IMR-90 (cell line): ENCODE measurements at regions of chr3 and their contacts with region 1.

Region 1: DNA sequence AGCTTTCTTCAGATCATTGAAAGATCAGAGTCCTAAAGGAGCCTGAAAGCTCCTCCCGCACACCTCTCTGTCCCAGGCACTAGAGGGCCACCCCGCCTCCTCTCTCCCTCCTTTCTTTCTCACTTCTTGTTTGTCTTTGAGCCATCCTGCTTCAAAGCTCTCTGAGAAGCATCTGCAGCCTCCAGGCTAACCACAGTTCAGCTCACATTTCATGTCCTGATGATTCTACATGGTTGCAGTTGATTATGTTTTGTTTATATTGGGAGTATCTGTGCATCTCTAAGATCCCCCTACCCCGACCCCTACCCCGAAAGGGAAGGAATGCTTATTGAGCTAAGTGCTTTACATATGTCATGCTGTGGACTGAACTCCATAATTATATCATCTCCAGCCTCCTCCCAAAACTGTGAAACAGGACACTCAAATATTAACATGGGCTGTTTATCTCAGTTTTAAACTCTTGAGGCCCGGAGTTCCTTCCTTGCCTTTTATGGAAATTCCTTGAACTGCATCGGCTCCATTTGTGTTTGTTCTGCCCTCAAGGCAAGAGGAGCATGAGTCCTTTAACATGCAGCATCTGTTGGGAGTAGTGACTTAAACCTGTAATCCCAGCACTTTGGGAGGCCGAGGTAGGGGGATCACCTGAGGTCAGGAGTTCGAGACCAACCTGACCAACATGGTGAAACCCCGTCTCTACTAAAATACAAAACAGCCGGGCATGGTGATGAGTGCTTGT is 30.9 kb downstream of the MGLL start:
- DNase-seq: peak; percentile 90
- ATAC-seq: peak; percentile 83
- H3K4me3 ChIP-seq: no peak overlapping the region
- H3K27ac ChIP-seq: peak overlapping the region; percentile 99
- H3K4me1 ChIP-seq: peaks cover 30% of the 10 kb centered on the region
- H3K27me3 ChIP-seq: no peaks in the 10 kb centered on the region
- CTCF ChIP-seq: peak; percentile 40
- POLR2A ChIP-seq: no peak
- RAD21 ChIP-seq: peak; percentile 51

Region 2: DNA sequence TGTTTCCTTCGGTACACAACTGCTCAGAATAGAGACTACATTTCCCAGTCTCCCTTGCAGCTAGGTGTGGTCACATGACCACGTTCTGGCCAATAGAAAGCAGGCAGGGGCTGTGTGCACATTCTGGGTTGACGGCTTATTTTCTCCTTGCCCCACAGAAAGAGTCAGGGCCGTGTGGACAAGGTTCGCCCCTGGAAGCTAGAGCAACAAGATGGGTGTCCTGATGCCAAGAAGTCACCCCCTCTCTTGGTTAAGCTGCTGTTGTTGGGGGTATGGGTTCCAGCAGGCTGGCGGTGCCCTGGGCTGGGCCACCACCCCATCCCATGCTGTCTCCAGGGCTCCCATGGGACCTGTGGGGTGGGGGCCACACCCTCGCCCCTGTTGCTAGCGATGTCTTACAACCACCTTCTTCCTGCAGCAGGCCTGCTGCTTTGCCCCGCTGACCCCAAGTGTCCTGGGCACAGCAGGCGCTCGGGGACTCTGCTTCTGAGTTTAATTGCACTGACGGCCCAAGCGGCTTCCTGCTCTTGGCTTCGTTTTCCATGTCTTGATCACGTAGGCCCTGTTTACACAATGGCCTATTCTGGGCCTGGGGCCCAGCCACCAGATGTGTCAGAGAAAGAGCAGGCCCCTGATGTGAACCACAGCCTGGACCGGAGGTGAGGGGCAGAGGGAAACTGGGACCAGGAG is 93.7 kb before region 1 on chr3:
- CTCF ChIA-PET with region 1: interaction called, 5 read pairs
- POLR2A ChIA-PET with region 1: no interaction called
- dilution Hi-C with region 1: no loop called
- in situ Hi-C with region 1: no loop called
- intact Hi-C with region 1: loop called (anchors 2 kb)
- DNase-seq: peak; percentile 90
- ATAC-seq: peak; percentile 77
- H3K4me3 ChIP-seq: no peak overlapping the region
- H3K27ac ChIP-seq: peak overlapping the region; percentile 88
- H3K4me1 ChIP-seq: peaks cover 30% of the 10 kb centered on the region
- H3K27me3 ChIP-seq: no peaks in the 10 kb centered on the region
- CTCF ChIP-seq: no peak
- POLR2A ChIP-seq: no peak
- RAD21 ChIP-seq: 0 out of 2 replicates have a peak, but pooled peaks have one; percentile 13

Region 3: DNA sequence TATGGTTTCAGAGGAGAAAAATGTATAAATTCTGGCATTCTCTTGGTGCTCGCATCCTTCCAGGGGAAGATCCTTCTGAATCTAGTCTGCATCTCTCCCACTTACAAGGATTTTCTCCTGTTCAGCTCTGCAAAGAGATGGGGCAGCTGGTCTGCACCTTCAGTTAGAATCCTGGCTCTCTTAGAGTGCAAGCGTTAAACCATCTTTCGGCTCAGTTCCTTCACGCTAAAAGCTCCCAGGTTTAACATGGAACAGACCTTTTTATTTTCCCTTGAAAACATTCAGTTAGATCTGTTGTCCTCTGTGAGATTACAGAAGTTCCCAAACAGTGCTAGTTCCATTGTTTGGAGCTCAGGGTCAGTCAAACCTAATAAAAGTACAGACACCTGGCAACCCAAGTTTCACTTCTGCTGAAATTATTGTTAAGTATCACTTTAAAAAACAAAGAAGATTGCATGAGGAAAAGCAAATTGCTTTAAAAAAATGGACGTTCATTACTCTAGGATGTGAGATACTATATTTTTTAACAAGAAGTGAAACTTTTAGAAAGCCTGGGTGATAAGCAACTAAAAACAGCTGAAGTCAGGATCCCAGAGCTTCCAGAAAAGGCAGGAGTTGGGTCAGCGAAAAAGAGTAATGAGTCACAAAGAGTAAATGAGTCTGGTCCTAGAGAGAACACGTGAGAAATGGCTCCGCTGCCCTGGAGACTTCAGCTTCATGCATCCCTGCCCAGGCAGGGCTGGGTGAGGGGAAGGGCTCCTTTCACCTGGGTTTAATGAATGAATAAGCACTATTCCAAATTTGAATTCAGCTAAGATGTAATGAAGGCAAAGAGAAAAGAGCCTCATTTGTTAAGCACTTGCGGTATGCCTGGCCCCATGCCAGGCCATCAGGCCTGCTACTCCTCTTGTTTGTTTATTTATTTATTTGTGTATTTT is 55.3 kb before region 1 on chr3:
- CTCF ChIA-PET with region 1: no interaction called
- POLR2A ChIA-PET with region 1: no interaction called
- dilution Hi-C with region 1: no loop called
- in situ Hi-C with region 1: no loop called
- intact Hi-C with region 1: loop called (anchors 1 kb)
- DNase-seq: peak; percentile 86
- ATAC-seq: peak; percentile 33; the same call in 1 of the 2 replicates
- H3K4me3 ChIP-seq: no peak overlapping the region
- H3K27ac ChIP-seq: peak overlapping the region; percentile 60
- H3K4me1 ChIP-seq: peaks cover 25% of the 10 kb centered on the region
- H3K27me3 ChIP-seq: no peaks in the 10 kb centered on the region
- CTCF ChIP-seq: no peak
- POLR2A ChIP-seq: no peak
- RAD21 ChIP-seq: no peak

Region 4: GRCh38 chr3:127768346-127769008 is 22.9 kb before region 1 on chr3:
- CTCF ChIA-PET with region 1: no interaction called
- POLR2A ChIA-PET with region 1: no interaction called
- dilution Hi-C with region 1: no loop called
- in situ Hi-C with region 1: no loop called
- intact Hi-C with region 1: loop called (anchors 2 kb)
- DNase-seq: peak; percentile 99
- ATAC-seq: peak; percentile 87
- H3K4me3 ChIP-seq: no peak overlapping the region
- H3K27ac ChIP-seq: peak overlapping the region; percentile 99
- H3K4me1 ChIP-seq: peaks cover 30% of the 10 kb centered on the region
- H3K27me3 ChIP-seq: no peaks in the 10 kb centered on the region
- CTCF ChIP-seq: peak; percentile 19
- POLR2A ChIP-seq: no peak
- RAD21 ChIP-seq: peak; percentile 33; the same call in 1 of the 2 replicates

Region 5: GRCh38 chr3:127835993-127836882 is 44.9 kb after region 1 on chr3:
- CTCF ChIA-PET with region 1: no interaction called
- POLR2A ChIA-PET with region 1: no interaction called
- dilution Hi-C with region 1: no loop called
- in situ Hi-C with region 1: no loop called
- intact Hi-C with region 1: no loop called
- DNase-seq: no peak
- ATAC-seq: no peak
- H3K4me3 ChIP-seq: no peak overlapping the region
- H3K27ac ChIP-seq: no peak overlapping the region
- H3K4me1 ChIP-seq: no peaks in the 10 kb centered on the region
- H3K27me3 ChIP-seq: peaks cover 7% of the 10 kb centered on the region
- CTCF ChIP-seq: no peak
- POLR2A ChIP-seq: no peak
- RAD21 ChIP-seq: no peak

Region 6: GRCh38 chr3:129560901-129561594 is 1769.7 kb after region 1 on chr3:
- CTCF ChIA-PET with region 1: no interaction called
- POLR2A ChIA-PET with region 1: interaction called, 16 read pairs
- dilution Hi-C with region 1: no loop called
- in situ Hi-C with region 1: no loop called
- intact Hi-C with region 1: no loop called
- DNase-seq: peak; percentile 76
- ATAC-seq: peak; percentile 80
- H3K4me3 ChIP-seq: peak overlapping the region; percentile 24; the same call in 1 of the 2 replicates
- H3K27ac ChIP-seq: peak overlapping the region; percentile 98
- H3K4me1 ChIP-seq: peaks cover 37% of the 10 kb centered on the region
- H3K27me3 ChIP-seq: no peaks in the 10 kb centered on the region
- CTCF ChIP-seq: no peak
- POLR2A ChIP-seq: no peak
- RAD21 ChIP-seq: 0 out of 2 replicates have a peak, but pooled peaks have one; percentile 9